Esophagus squamous epithelium (tissue), 5 donors: ENCODE measurements at regions of chr2 and their contacts with region 1.

Region 1: DNA sequence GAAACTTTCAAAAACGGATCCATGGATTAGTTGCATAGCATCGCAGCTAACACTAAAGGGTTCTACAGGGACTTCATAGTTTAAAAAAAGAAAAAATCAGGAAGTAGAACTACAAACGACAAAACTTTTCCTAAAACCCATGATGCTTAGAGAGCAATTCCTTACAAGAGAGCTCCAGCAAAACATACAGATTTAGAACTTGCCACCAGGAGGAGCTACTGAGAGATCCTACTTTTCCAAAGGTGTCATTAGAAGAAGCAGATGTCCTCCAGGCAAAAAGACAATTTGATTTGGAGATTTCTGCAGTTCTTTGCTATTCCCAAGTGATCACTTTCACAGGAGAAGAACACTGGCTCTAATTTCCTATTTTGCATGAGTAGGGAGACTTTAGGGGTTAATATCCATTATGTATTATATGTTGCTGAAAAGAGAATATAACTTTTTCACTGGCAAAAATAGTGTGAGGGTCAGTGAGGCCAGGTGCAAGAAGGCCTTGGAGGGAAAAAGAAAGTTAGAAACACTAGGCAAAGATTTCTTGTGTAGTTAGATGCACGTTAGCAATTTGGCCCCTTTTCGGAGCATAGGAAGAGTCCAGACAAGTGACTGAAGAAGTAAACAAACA is 436.2 kb downstream of the SUCLG1 start:
- DNase-seq: no peak
- H3K4me3 ChIP-seq: no peak overlapping the region
- H3K27ac ChIP-seq: no peak overlapping the region
- H3K4me1 ChIP-seq: no peaks in the 10 kb centered on the region
- H3K27me3 ChIP-seq: no peaks in the 10 kb centered on the region
- CTCF ChIP-seq: peak in 5 of 6 experiments; percentile 43 to 60 (median 49)
- POLR2A ChIP-seq: no peak

Region 2: GRCh38 chr2:84302513-84303412 is 279.8 kb after region 1 on chr2:
- intact Hi-C with region 1: loop called (anchors 10 kb)
- DNase-seq: no peak
- H3K4me3 ChIP-seq: no peak overlapping the region
- H3K27ac ChIP-seq: no peak overlapping the region
- H3K4me1 ChIP-seq: peaks cover 0 to 11% (median 0%) of the 10 kb centered on the region in 3 donors
- H3K27me3 ChIP-seq: no peaks in the 10 kb centered on the region
- CTCF ChIP-seq: peak in 5 of 6 experiments; percentile 55 to 76 (median 62)
- POLR2A ChIP-seq: no peak